ENCODE measurements at regions of chr2 and their contacts with region 1.

Region 1: DNA sequence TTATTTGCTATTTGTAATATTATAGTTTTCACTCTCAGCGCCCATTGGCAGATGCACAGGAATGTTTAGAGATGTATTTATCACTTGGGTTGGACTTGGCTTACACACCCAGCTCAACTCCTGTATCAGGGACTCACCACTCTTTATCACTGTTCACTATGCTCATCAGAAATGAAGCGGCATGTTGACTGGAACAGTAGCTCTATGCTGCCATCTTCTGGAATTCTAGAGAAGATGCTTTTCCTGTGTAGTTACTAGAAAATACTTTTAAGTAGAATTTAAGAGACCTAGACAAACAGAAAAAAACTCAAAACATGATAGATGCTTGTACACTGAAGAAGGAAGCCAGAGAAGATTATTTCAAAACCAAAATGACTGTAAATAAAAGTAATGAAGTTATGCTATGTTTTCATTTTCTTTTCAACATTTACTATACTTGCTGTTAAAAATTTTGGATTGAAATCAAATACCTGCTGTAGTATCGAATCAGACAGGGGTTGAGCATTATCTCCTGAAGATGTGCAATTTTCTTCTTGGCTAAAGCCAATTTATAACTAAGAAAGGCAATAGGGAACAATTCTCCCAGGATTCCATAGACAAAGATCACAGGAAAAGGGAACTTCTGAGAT is 47.4 kb upstream of the NXPH2 start:
- DNase-seq: peak; percentile 46

Region 2: GRCh38 chr2:137888845-137889244 is 938.7 kb before region 1 on chr2:
- CTCF ChIA-PET with region 1: interaction called, 13 read pairs
- POLR2A ChIA-PET with region 1: no interaction called
- DNase-seq: peak; percentile 28

Region 3: GRCh38 chr2:138321458-138321857 is 506.1 kb before region 1 on chr2:
- CTCF ChIA-PET with region 1: no interaction called
- POLR2A ChIA-PET with region 1: no interaction called
- DNase-seq: no peak

Region 4: GRCh38 chr2:138814120-138814898 is 13.2 kb before region 1 on chr2:
- CTCF ChIA-PET with region 1: interaction called, 17 read pairs
- POLR2A ChIA-PET with region 1: no interaction called
- DNase-seq: peak; percentile 34